AG04449 (cell line): ENCODE measurements at regions of chr7 and their contacts with region 1.

Region 1: GRCh38 chr7:123692471-123692877 is 36.8 kb downstream of the LMOD2 start:
- DNase-seq: no peak
- H3K4me3 ChIP-seq: no peak overlapping the region
- CTCF ChIP-seq: no peak

Region 2: DNA sequence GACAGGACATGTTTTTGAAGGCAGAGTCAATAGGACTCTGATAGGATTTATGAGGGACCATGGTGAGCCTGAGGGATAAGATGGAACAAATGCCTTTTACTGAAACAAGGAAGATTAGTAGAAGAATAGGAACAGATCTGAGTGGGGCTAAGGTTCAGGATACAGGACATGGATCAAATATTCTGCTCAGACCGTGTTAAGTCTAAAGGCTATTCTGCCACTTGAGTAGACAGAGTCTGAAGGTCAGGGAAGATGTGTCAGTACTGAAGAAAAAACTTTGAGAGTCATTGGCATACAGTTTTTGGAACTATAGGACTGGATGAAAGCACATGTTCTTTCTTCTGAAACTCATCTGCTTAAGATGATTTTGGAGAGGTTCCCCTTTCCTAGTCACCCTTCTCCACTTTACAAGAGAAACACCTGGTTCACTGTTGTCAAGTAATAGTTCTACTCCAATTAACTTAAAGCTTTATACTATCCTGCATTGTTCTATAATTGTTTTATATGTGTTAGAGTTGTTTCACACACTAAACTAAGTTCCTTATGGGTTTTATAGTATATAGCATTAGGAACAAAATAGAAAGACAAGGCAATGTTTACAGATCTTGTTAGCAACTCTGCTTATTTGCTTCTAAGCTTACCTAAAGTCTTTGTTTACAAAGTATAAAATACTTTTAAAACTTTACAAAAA is 12.9 kb after region 1 on chr7:
- CTCF ChIA-PET with region 1: interaction called, 24 read pairs
- POLR2A ChIA-PET with region 1: no interaction called
- DNase-seq: no peak
- H3K4me3 ChIP-seq: no peak overlapping the region
- CTCF ChIP-seq: no peak